Right ventricle myocardium inferior (tissue), 1 donor: ENCODE measurements at regions of chr13 and their contacts with region 1.

Region 1: DNA sequence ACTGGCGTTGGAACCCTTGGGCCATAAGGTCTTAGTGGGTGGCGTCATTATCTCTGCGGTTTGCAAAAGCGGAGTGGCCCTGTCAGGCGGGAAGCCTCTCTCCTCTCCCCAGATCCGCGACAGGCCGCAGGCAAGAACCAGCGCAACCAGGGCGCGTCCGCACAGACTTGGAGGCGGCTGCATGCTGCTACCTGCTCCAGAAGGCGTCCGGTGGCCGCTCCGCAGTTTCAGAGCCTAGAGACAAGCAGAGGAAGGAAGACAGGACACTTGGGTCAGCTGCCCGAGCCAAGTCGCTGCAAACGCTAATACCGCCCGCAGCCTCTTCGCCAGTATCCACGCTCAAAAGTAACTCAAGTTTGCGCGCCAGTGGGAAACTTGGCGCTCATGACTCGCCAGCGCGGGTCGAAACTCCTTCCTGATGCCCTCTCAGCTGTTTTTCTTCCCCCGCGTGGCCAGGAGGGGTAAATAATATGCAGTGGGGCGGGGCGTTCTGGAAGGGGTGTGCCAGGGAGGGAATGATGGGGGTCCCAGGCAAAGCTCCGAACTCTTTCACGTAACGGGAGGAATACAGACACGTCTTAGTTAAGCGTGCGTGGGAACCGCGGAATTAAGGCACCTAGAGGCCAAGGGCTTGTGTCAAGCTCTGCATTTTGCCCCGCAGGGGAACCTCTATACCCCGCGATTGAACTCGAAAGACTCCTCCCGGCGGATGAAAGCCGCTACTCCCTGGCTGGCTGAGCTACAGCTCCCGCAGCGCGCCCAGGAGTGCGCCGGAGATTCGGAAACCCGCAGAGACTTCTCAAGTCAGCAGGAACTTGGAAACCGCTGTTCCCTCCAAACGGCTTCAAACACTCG is at the start of gene EDNRB:
- DNase-seq: peak; percentile 81
- ATAC-seq: peak; percentile 72
- total RNA-seq, gene EDNRB: 20.2 TPM

Region 2: DNA sequence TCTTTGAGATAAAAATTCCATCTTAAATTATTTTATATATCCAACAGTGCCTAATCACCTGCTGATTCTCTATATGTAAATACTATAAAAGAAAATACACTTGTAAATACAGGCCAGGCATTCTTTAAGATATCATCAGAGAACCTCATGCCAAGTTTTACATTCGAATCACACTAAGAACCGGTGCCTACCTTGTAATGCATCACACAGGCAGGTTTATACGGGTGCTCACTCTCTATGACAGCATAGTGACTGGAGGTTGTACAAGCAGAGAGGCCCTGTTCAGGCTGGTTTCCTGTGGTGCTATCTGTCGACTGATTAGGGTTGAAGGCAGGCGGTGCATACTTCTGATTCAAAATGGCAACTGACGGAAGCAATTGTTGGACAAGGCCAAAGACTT is 750.4 kb before region 1 on chr13:
- intact Hi-C with region 1: no loop called
- DNase-seq: no peak
- ATAC-seq: no peak

Region 3: GRCh38 chr13:77779552-77780272 is 138.9 kb before region 1 on chr13:
- intact Hi-C with region 1: loop called (anchors 10 kb)
- DNase-seq: no peak
- ATAC-seq: peak; percentile 66

Region 4: DNA sequence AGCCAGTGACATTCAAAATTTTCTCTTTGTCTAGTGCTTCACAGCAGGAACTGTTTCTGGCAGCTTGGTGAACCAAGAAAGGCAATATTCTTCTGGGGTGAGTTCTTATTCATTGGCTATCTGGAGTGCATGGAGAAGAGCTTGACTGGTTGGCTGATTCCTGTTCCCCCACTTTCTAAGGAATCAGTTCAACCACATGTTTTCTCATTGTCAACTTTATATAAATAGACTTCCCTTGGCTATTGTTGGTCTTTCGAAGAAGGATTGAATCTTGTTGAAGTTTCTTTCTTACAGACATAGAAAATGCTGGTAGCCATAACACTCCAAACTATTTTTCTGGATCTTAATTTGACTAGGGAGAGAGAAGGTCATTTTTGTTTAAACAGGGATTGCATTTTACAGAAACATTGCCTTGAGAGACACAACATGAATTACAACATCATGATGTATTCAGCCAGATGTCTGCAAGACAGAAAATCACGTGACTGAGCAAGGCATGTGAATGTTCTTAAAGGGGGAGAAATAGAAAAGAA is 85.2 kb before region 1 on chr13:
- intact Hi-C with region 1: loop called (anchors 10 kb)
- DNase-seq: no peak
- ATAC-seq: peak; percentile 79

Region 5: GRCh38 chr13:77988355-77988754 is 69.7 kb after region 1 on chr13:
- intact Hi-C with region 1: loop called (anchors 2 kb)
- DNase-seq: no peak
- ATAC-seq: peak; percentile 37

Region 6: GRCh38 chr13:78102121-78102677 is 183.6 kb after region 1 on chr13:
- intact Hi-C with region 1: loop called (anchors 10 kb)
- DNase-seq: no peak
- ATAC-seq: peak; percentile 97